Endothelial cell of umbilical vein (primary cell): ENCODE measurements at regions of chr5 and their contacts with region 1.

Region 1: DNA sequence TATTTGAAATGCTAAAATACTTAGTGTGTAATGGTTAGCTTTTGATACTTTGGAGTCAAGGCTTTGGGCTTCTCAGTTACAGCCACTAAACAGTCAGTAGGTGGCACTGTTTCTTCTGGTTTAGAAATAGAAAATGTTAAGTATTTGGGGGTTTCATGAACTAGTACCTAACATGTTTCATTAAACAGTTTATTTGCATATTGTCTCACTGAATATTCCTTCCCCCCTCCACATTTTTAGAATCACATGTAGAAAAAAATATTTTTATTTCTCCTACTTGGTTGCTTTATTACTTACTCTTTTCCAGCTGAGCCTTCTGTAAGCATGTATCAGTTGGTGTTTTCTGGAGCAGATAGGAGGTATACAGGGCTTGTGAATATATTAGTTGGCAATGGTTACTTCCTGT is 48.0 kb downstream of the IPO11 start:
- DNase-seq: peak; percentile 67
- H3K4me3 ChIP-seq: no peak overlapping the region
- H3K27ac ChIP-seq: no peak overlapping the region
- H3K4me1 ChIP-seq: peaks cover 3% of the 10 kb centered on the region
- H3K27me3 ChIP-seq: no peaks in the 10 kb centered on the region
- CTCF ChIP-seq: peak; percentile 59 to 68
- POLR2A ChIP-seq: no peak

Region 2: DNA sequence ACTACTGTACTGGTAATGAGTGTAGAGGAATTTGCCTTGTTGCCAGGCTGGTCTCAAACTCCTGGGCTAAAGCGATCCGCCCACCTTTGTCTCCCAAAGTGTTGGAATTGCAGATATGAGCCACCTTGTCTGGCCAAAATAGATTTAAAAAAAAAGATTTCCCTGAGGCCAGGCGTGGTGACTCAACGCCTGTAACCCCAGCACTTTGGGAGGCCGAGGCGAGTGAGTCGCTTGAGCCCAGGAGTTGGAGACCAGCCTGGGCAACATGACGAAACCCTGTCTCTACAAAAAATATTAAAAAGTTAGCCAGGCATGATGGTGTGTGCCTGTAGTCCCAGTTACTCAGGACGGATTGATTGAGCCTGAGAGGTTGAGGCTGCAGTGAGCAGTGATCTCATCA is 14.5 kb after region 1 on chr5:
- CTCF ChIA-PET with region 1: interaction called, 21 read pairs
- POLR2A ChIA-PET with region 1: no interaction called
- dilution Hi-C with region 1: no loop called
- intact Hi-C with region 1: no loop called
- DNase-seq: no peak
- H3K4me3 ChIP-seq: no peak overlapping the region
- H3K27ac ChIP-seq: no peak overlapping the region
- H3K4me1 ChIP-seq: peaks cover 9% of the 10 kb centered on the region
- H3K27me3 ChIP-seq: no peaks in the 10 kb centered on the region
- CTCF ChIP-seq: no peak
- POLR2A ChIP-seq: no peak

Region 3: GRCh38 chr5:62589504-62589903 is 128.9 kb after region 1 on chr5:
- CTCF ChIA-PET with region 1: interaction called, 31 read pairs
- POLR2A ChIA-PET with region 1: no interaction called
- dilution Hi-C with region 1: no loop called
- intact Hi-C with region 1: no loop called
- DNase-seq: no peak
- H3K4me3 ChIP-seq: no peak overlapping the region
- H3K27ac ChIP-seq: no peak overlapping the region
- H3K4me1 ChIP-seq: peaks cover 36% of the 10 kb centered on the region
- H3K27me3 ChIP-seq: no peaks in the 10 kb centered on the region
- CTCF ChIP-seq: peak in 1 of 2 donors; percentile 12
- POLR2A ChIP-seq: no peak

Region 4: GRCh38 chr5:62631909-62632580 is 171.5 kb after region 1 on chr5:
- CTCF ChIA-PET with region 1: interaction called, 43 read pairs
- POLR2A ChIA-PET with region 1: no interaction called
- dilution Hi-C with region 1: no loop called
- intact Hi-C with region 1: loop called (anchors 5 kb)
- DNase-seq: peak; percentile 12
- H3K4me3 ChIP-seq: no peak overlapping the region
- H3K27ac ChIP-seq: no peak overlapping the region
- H3K4me1 ChIP-seq: no peaks in the 10 kb centered on the region
- H3K27me3 ChIP-seq: no peaks in the 10 kb centered on the region
- CTCF ChIP-seq: no peak
- POLR2A ChIP-seq: no peak

Region 5: GRCh38 chr5:62718368-62718767 is 257.8 kb after region 1 on chr5:
- CTCF ChIA-PET with region 1: interaction called, 5 read pairs
- POLR2A ChIA-PET with region 1: no interaction called
- dilution Hi-C with region 1: no loop called
- intact Hi-C with region 1: loop called (anchors 1 kb)
- DNase-seq: no peak
- H3K4me3 ChIP-seq: no peak overlapping the region
- H3K27ac ChIP-seq: no peak overlapping the region
- H3K4me1 ChIP-seq: no peaks in the 10 kb centered on the region
- H3K27me3 ChIP-seq: peaks cover 2 to 5% of the 10 kb centered on the region in 2 experiments
- CTCF ChIP-seq: no peak
- POLR2A ChIP-seq: no peak

Region 6: DNA sequence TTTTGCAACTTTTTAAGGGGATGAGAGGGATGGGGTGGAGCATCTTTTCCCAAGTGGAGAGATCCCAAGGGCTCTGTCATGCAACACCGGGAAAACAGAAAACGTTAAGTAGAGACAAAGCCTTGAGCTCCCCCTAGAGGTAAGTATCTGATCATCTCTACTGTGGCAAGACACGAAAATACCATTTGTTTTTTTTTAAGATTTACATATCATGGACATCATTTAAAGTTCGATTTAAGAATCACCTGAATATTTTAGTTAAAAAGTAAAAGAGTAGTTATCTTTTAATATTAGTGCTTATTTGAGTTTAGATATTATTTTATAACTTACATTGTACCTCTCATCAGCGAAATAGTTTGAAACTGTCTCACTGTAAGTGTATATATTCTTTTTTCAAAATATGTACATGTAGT is 318.4 kb after region 1 on chr5:
- CTCF ChIA-PET with region 1: interaction called, 132 read pairs
- POLR2A ChIA-PET with region 1: no interaction called
- dilution Hi-C with region 1: no loop called
- intact Hi-C with region 1: loop called (anchors 1 kb)
- DNase-seq: peak; percentile 52
- H3K4me3 ChIP-seq: no peak overlapping the region
- H3K27ac ChIP-seq: no peak overlapping the region
- H3K4me1 ChIP-seq: no peaks in the 10 kb centered on the region
- H3K27me3 ChIP-seq: no peaks in the 10 kb centered on the region
- CTCF ChIP-seq: peak; percentile 66 to 69
- POLR2A ChIP-seq: no peak